Right cardiac atrium (tissue), 5 donors: ENCODE measurements at regions of chr12 and their contacts with region 1.

Region 1: GRCh38 chr12:116236148-116236731 is 41.3 kb downstream of the MED13L start:
- DNase-seq: peak in 2 of 3 donors; percentile 26 to 64
- ATAC-seq: peak; percentile 57 to 77
- H3K4me3 ChIP-seq: no peak overlapping the region
- H3K27ac ChIP-seq: no peak overlapping the region
- H3K4me1 ChIP-seq: peaks cover 2% of the 10 kb centered on the region
- H3K27me3 ChIP-seq: no peaks in the 10 kb centered on the region

Region 2: DNA sequence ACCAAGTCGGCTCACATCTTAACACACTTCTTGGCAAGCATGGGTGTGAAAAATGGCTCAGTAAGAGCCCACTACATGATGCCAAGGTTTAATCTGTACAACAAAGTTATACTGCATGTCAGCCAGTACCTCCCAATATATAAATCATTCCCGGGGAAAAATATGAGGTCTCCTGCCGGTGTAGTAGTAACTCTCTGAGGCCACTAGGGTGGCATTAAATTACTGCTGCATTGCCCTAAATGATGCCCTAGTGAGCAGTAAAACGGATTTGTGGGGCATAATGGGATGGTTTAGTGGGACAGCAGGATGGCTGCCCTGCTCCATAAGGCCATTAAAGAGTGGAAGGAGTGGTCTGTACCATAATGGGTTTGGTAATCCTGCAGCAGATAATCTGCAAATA is 226.4 kb before region 1 on chr12:
- intact Hi-C with region 1: loop called (anchors 5 to 10 kb)
- DNase-seq: no peak
- ATAC-seq: no peak
- H3K4me3 ChIP-seq: no peak overlapping the region
- H3K27ac ChIP-seq: no peak overlapping the region
- H3K4me1 ChIP-seq: peaks cover 2% of the 10 kb centered on the region
- H3K27me3 ChIP-seq: no peaks in the 10 kb centered on the region

Region 3: GRCh38 chr12:116015525-116015924 is 220.7 kb before region 1 on chr12:
- intact Hi-C with region 1: loop called (anchors 5 to 10 kb)
- DNase-seq: no peak
- ATAC-seq: peak; percentile 79 to 87
- H3K4me3 ChIP-seq: no peak overlapping the region
- H3K27ac ChIP-seq: no peak overlapping the region
- H3K4me1 ChIP-seq: peaks cover 2% of the 10 kb centered on the region
- H3K27me3 ChIP-seq: no peaks in the 10 kb centered on the region

Region 4: GRCh38 chr12:116037941-116038837 is 198.1 kb before region 1 on chr12:
- intact Hi-C with region 1: no loop called
- DNase-seq: no peak
- ATAC-seq: no peak
- H3K4me3 ChIP-seq: no peak overlapping the region
- H3K27ac ChIP-seq: no peak overlapping the region
- H3K4me1 ChIP-seq: peaks cover 5% of the 10 kb centered on the region
- H3K27me3 ChIP-seq: no peaks in the 10 kb centered on the region

Region 5: GRCh38 chr12:116135209-116135930 is 100.9 kb before region 1 on chr12:
- intact Hi-C with region 1: no loop called
- DNase-seq: peak in 1 of 3 donors; percentile 29
- ATAC-seq: peak in 1 of 2 donors; percentile 61
- H3K4me3 ChIP-seq: no peak overlapping the region
- H3K27ac ChIP-seq: no peak overlapping the region
- H3K4me1 ChIP-seq: peaks cover 11% of the 10 kb centered on the region
- H3K27me3 ChIP-seq: no peaks in the 10 kb centered on the region

Region 6: GRCh38 chr12:116325336-116325664 is 89.1 kb after region 1 on chr12:
- intact Hi-C with region 1: no loop called
- DNase-seq: no peak
- ATAC-seq: no peak
- H3K4me3 ChIP-seq: no peak overlapping the region
- H3K27ac ChIP-seq: no peak overlapping the region
- H3K4me1 ChIP-seq: peaks cover 2% of the 10 kb centered on the region
- H3K27me3 ChIP-seq: no peaks in the 10 kb centered on the region